PC-9 (cell line): ENCODE measurements at regions of chr21 and their contacts with region 1.

Region 1: DNA sequence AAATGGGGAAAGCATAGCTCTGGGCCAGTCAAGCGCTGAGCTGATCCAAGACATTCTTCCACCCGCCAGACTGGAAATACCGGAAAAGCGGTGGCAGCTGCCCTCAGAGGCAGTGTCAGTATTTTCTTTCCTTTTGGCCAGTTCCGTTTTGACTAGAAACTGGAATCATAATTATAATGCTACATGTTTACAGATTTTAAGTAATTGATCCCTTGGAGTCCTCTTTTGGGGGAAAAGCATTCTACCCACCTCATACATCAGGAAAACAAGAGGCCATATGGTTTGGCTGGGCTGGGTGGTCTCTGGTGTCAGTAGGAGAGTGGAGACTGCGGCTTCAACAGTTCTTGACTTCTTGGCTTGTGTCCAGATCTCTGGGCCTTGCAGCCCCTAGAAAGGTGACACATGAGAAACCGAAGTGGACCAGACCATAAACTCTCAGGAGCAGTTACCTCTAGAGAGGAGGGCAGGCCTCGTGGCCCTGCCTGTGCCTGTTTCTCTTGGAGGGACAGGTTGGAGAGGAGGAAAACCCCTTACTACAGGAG is 30.3 kb upstream of the CLDN14 start:
- DNase-seq: peak; percentile 80 to 87
- H3K4me3 ChIP-seq: peak overlapping the region; percentile 31; the same call in 1 of the 2 replicates
- H3K27ac ChIP-seq: peak overlapping the region; percentile 87
- H3K4me1 ChIP-seq: peaks cover 41% of the 10 kb centered on the region
- H3K27me3 ChIP-seq: no peaks in the 10 kb centered on the region
- CTCF ChIP-seq: no peak

Region 2: DNA sequence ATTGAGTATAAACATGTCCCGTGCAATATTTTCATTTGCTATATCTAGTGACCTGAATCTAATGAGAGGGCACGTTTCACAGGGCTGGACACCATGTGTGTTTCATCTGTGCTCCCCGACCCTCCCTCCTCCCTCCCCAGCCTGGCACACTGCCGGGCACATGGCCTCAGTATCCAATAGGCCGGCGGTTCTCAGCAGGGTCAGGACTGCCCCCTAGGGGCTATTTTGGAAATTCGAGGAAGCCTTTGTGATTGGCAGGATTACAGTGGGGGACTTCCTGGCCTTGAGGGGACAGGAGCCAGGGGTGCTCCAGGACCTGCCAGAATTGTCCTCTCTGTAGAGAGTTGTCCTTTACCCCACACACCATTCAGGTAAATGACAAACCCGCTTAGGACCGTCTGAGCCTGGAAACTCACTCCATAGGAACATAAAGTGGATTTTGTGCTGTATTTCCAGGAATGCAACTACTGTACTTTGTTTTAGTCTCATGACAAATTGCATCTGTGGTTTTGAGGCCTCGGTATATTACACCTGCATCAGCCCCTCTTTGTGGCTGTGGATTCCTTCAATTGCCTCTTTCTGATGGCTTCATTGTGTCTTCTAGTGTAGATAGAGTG is 79.3 kb after region 1 on chr21:
- CTCF ChIA-PET with region 1: interaction called, 14 read pairs
- POLR2A ChIA-PET with region 1: no interaction called
- intact Hi-C with region 1: loop called (anchors 10 kb)
- DNase-seq: no peak
- H3K4me3 ChIP-seq: no peak overlapping the region
- H3K27ac ChIP-seq: no peak overlapping the region
- H3K4me1 ChIP-seq: no peaks in the 10 kb centered on the region
- H3K27me3 ChIP-seq: no peaks in the 10 kb centered on the region
- CTCF ChIP-seq: peak; percentile 56